ENCODE measurements at regions of chr9 and their contacts with region 1.

Region 1: GRCh38 chr9:108702681-108703080 is 153.1 kb downstream of the ACTL7B start:
- DNase-seq: no peak
- H3K27ac ChIP-seq: no peak overlapping the region
- CTCF ChIP-seq: no peak

Region 2: GRCh38 chr9:108830272-108830671 is 127.6 kb after region 1 on chr9:
- CTCF ChIA-PET with region 1: no interaction called
- POLR2A ChIA-PET with region 1: interaction called, 10 read pairs
- DNase-seq: peak; percentile 57
- H3K27ac ChIP-seq: no peak overlapping the region
- CTCF ChIP-seq: no peak